Activated CD8-positive, alpha-beta T cell treated with anti-CD3 and anti-CD28 coated beads, Interleukin-2, amount 10 ng/mL, durations not matched to agents 7 days and 5 days (primary cell): ENCODE measurements at regions of chr19 and their contacts with region 1.

Region 1: GRCh38 chr19:42219812-42220750 is at the start of gene ZNF526:
- DNase-seq: peak; percentile 98
- ATAC-seq: peak; percentile 90
- H3K4me3 Mint-ChIP-seq: peak within 1 kb of the TSS; percentile 92
- H3K27ac Mint-ChIP-seq: peak within 1 kb of the TSS; percentile 93
- H3K4me1 Mint-ChIP-seq: peaks cover 54% of the 10 kb centered on the region
- H3K27me3 Mint-ChIP-seq: no peaks in the 10 kb centered on the region
- total RNA-seq, gene ZNF526: 19.5 to 21.5 TPM

Region 2: DNA sequence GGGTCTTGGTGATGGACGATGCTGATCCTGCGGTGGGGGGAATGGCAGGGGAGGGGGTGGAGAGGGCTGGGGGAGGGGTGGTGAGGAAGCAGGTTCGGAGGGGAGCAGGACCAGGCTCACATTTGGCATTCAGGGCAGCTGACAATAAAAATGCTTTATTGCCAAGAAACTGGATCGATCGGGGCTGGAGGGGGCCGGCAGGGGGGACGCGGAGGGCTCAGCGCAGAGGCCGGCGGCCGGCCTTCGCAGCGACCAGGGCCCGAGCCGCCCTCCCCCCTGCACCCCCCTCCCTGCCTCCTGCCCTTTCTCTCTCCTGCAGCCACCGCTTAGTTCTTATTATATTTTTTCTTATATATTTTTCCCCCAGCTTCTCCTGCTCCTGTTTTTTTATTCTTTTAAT is 69.7 kb before region 1 on chr19:
- CTCF ChIA-PET with region 1: no interaction called
- POLR2A ChIA-PET with region 1: no interaction called
- DNase-seq: no peak
- ATAC-seq: no peak
- H3K4me3 Mint-ChIP-seq: no peak overlapping the region
- H3K27ac Mint-ChIP-seq: no peak overlapping the region
- H3K4me1 Mint-ChIP-seq: peaks cover 37% of the 10 kb centered on the region
- H3K27me3 Mint-ChIP-seq: peaks cover 19% of the 10 kb centered on the region

Region 3: GRCh38 chr19:42199440-42200115 is 20.5 kb before region 1 on chr19:
- CTCF ChIA-PET with region 1: interaction called, 21 read pairs
- POLR2A ChIA-PET with region 1: interaction called, 32 read pairs
- DNase-seq: peak; percentile 92
- ATAC-seq: peak; percentile 74
- H3K4me3 Mint-ChIP-seq: peak overlapping the region; percentile 72
- H3K27ac Mint-ChIP-seq: peak overlapping the region; percentile 96
- H3K4me1 Mint-ChIP-seq: peaks cover 80% of the 10 kb centered on the region
- H3K27me3 Mint-ChIP-seq: no peaks in the 10 kb centered on the region